ENCODE measurements at regions of chr13 and their contacts with region 1.

Region 1: DNA sequence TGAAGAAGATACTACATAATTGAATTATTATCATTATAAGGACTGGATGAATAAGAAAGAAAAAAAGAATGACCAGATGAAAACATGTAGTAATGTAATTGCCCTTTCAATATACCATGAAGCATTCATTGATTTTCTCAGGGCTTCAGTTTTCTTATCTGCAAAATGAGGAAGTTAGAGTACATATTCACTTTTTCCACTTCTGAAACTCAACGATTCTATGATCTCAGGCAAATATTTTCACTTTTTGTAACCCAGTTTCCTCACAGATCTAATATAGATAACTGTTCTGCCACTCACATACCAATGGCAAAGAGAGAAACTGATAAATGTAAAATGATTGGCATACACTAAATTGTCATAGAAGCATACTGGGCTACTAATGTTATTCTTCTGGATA is 856.6 kb upstream of the KLHL1 start:
- DNase-seq: no peak

Region 2: GRCh38 chr13:72029981-72030380 is 1065.1 kb after region 1 on chr13:
- intact Hi-C with region 1: loop called in 1 of 2 experiments (anchors 5 kb)
- DNase-seq: no peak

Measured in posterior vena cava (tissue), 2 donors.